OCI-LY7 (cell line): ENCODE measurements at regions of chr9 and their contacts with region 1.

Region 1: GRCh38 chr9:37036776-37037502 is 2.9 kb upstream of the PAX5 start:
- DNase-seq: peak; percentile 78
- H3K4me3 ChIP-seq: peak overlapping the region; percentile 88
- H3K27ac ChIP-seq: peak overlapping the region; percentile 95
- H3K4me1 ChIP-seq: peaks cover 63% of the 10 kb centered on the region
- CTCF ChIP-seq: peak; percentile 20; the same call in 1 of the 2 replicates

Region 2: GRCh38 chr9:36878986-36879982 is 157.7 kb before region 1 on chr9:
- CTCF ChIA-PET with region 1: no interaction called
- POLR2A ChIA-PET with region 1: interaction called, 5 read pairs
- intact Hi-C with region 1: loop called (anchors 5 kb)
- DNase-seq: no peak
- H3K4me3 ChIP-seq: no peak overlapping the region
- H3K27ac ChIP-seq: no peak overlapping the region
- H3K4me1 ChIP-seq: peaks cover 30% of the 10 kb centered on the region
- CTCF ChIP-seq: no peak

Region 3: DNA sequence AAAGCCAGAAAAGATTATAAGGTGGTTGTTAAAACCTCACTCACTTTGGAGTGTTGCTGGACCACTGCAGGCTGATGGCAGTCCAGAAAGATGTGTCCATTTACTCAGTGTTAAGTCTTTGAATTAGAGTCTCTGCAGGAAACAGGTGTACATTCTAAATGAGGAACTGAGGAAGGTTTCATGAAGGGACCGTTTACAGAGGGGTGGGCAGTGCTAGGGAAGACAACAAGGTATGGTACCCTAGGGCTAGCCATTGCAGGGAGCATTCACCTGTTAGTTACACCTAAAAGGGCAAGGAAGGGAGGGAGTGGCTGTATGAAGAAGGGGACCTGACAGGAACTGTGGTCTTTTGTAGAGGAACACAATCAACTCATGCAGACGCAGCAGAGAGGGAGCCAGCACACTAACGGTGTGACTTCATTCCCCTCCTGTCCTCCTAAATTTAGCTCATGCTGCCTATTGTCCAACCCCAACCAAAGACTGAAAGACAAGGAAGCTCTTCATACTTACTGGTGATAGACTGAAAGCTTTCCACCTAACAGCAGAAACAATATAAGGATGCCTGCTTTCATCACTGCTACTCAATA is 29.3 kb after region 1 on chr9:
- CTCF ChIA-PET with region 1: no interaction called
- POLR2A ChIA-PET with region 1: interaction called, 14 read pairs
- intact Hi-C with region 1: no loop called
- DNase-seq: peak; percentile 95
- H3K4me3 ChIP-seq: peak overlapping the region; percentile 52
- H3K27ac ChIP-seq: peak overlapping the region; percentile 95
- H3K4me1 ChIP-seq: peaks cover 72% of the 10 kb centered on the region
- CTCF ChIP-seq: no peak

Region 4: GRCh38 chr9:37119907-37120842 is 83.2 kb after region 1 on chr9 and contains the start of gene ZCCHC7:
- CTCF ChIA-PET with region 1: no interaction called
- POLR2A ChIA-PET with region 1: interaction called, 11 read pairs
- intact Hi-C with region 1: loop called (anchors 2 kb)
- DNase-seq: peak; percentile 96
- H3K4me3 ChIP-seq: peak within 1 kb of the TSS; percentile 96
- H3K27ac ChIP-seq: peak within 1 kb of the TSS; percentile 65
- H3K4me1 ChIP-seq: peaks cover 43% of the 10 kb centered on the region
- CTCF ChIP-seq: no peak
- total RNA-seq, gene ZCCHC7: 108 and 110 TPM in 2 replicates

Region 5: DNA sequence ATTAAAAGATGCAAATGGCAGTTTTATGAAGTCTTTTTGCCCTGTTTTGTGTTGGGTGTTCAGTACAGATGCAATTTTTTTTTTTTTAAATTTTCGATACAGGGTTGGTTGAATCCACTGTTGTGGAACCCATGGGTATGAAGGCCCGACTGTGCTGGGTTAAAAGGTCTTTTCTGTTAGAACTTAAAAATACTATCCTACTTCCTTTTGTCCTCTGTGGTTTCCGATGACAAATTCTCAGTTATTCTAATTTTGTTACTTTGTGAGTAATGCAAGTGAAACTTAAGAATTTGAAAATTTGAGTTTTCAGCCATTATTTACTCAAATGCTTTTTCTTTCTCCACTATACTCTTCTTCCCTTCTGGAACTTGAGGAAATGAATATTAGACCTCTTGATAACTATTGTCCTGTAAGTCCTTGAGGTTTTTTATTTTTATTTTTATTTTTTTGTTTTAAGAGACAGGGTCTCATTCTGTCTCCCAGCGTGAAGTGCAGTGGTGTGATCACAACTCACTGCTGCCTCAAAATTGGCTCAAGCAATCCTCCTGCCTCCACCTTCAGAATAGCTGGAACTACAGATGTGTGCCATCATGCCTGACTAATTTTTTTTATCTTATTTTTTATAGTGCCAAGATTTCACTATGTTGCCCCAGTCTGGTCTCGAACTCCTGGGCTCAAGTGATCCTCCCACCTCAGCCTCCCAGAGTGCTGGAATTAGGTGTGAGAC is 150.9 kb after region 1 on chr9:
- CTCF ChIA-PET with region 1: interaction called, 3 read pairs
- POLR2A ChIA-PET with region 1: interaction called, 4 read pairs
- intact Hi-C with region 1: loop called (anchors 1 kb)
- DNase-seq: peak; percentile 76
- H3K4me3 ChIP-seq: peak overlapping the region; percentile 64
- H3K27ac ChIP-seq: peak overlapping the region; percentile 90
- H3K4me1 ChIP-seq: peaks cover 72% of the 10 kb centered on the region
- CTCF ChIP-seq: no peak

Region 6: DNA sequence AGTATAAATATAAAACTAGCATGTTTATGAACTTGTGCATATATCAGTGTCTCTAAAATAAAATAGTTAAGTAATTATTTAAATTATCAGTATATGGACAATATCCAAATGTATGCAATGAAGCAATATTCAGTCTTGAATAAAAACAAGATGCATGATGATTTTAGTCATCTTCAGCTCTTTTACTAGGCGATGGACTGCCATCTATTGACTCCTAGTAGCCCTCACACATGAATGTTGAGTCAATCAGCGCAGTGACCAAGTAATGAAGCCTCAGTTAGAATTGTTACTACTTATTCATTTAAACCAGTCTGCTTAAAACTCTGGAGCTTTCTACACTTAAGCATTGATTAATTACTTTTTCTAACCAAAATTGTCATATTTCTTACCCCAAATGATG is 292.6 kb after region 1 on chr9:
- CTCF ChIA-PET with region 1: no interaction called
- POLR2A ChIA-PET with region 1: interaction called, 11 read pairs
- intact Hi-C with region 1: loop called (anchors 1 kb)
- DNase-seq: peak; percentile 88
- H3K4me3 ChIP-seq: peak overlapping the region; percentile 44
- H3K27ac ChIP-seq: peak overlapping the region; percentile 98
- H3K4me1 ChIP-seq: peaks cover 99% of the 10 kb centered on the region
- CTCF ChIP-seq: peak; percentile 96